ENCODE measurements at regions of chr3 and their contacts with region 1.

Region 1: DNA sequence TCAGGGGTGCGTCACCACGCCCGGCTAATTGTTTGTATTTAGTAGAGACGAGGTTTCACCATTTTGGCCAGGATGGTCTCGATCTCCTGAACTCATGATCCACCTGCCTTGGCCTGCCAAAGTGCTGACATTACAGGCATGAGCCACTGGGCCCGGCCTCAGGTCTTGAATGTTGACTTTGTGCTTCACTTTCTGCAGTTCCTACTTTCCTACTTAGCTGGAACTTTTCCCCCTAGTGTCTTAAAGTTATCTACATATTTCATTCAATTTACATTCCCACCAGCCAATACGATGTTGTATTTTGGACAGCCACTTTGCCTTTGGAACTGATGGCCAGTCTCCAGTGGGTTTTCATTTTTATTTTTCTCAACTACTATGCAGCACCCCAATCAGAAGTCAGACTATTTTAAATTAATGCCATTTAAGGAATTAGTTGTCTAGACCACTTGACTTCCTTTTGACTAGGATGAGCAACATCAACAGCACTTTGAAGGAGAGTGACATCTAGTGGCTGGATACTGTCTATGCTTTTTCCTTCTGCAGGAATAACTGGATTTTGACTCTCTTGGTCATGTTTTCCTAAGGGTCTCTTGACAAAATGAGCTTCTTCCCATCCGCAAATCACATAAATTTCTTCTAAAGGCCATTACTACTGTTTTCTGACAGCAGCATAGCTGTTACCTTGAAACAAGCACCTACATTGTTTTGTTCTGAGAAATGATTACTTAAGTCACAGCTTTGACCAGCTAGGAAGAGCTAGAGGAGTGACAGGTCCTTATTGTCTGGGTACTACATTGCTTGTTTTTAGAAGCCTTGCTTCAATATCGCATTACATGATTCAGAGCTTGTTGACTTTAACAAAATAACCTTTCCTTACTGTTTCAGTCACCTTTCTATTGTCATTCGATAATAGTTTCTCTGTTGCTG is 140.2 kb downstream of the ITPR1 start:
- DNase-seq: no peak
- ATAC-seq: peak; percentile 61

Region 2: GRCh38 chr3:4466741-4467521 is 166.4 kb before region 1 on chr3 and contains the start of gene SUMF1:
- intact Hi-C with region 1: loop called (anchors 5 kb)
- DNase-seq: peak; percentile 94
- ATAC-seq: peak; percentile 97
- total RNA-seq, gene SUMF1: 8.4 TPM

Measured in Right ventricle myocardium inferior (tissue), 1 donor.